Gastrocnemius medialis (tissue), 4 donors: ENCODE measurements at regions of chr3 and their contacts with region 1.

Region 1: DNA sequence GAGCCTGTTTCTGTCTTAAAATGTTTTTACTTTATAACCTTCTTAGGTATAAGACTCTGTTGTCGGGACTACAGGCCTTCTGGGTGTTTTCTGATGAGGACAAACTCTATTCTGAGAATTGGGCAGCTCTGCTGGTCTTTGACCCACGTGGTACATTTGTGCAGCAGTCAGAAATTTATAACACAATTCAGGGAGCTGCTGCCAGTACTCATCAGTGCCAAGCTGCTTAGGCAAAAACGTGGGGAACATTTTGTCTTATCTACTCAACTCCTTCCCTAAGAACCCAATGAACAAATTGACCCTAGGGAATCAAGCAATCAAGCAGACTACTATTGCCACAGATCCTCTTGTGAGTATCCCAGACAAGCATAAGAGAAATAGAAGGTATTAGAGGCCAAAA is 180.7 kb upstream of the PDZRN3 start:
- DNase-seq: peak; percentile 71 to 81
- ATAC-seq: peak; percentile 99
- H3K4me3 ChIP-seq: no peak overlapping the region
- H3K27ac ChIP-seq: peak overlapping the region; percentile 63 to 86 (median 72)
- H3K4me1 ChIP-seq: peaks cover 14 to 28% of the 10 kb centered on the region in 2 donors
- H3K27me3 ChIP-seq: no peaks in the 10 kb centered on the region
- CTCF ChIP-seq: no peak
- POLR2A ChIP-seq: no peak

Region 2: GRCh38 chr3:73624821-73625665 is 180.4 kb before region 1 on chr3 and contains the start of gene PDZRN3:
- in situ Hi-C with region 1: no loop called
- intact Hi-C with region 1: loop called (anchors 5 kb)
- DNase-seq: peak; percentile 41 to 44
- ATAC-seq: peak; percentile 46 to 48
- H3K4me3 ChIP-seq: peak within 1 kb of the TSS; percentile 71 to 93 (median 78)
- H3K27ac ChIP-seq: peak within 1 kb of the TSS; percentile 89 to 94 (median 92)
- H3K4me1 ChIP-seq: peaks cover 34 to 56% of the 10 kb centered on the region in 2 donors
- H3K27me3 ChIP-seq: no peaks in the 10 kb centered on the region
- CTCF ChIP-seq: peak in 1 of 5 experiments; percentile 3
- POLR2A ChIP-seq: peak; percentile 64 to 83
- total RNA-seq, gene PDZRN3: 9.1 to 30.3 (median 24.7) TPM

Region 3: DNA sequence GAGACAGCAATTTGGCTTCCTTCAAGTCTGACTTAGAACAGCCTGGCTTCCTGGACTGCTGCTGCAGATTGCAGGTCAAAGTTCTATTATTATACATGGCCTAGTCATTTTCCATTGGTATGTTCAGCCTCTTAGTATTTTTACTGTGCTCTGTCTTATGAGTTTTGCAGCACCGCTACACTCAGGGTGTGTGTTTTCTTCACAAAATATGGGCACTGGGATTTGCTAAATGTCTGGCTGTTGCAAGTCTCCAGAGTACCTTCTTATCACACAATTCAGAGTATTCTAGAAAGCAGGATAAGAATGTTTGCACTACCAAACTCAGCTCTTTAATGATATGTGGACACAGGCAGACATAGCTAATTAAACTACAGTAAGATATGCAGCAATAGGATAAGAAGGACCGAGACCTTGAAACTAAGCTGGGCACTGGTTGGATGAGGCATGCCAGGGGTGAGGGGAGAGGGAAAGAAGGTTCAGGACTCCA is 22.3 kb after region 1 on chr3:
- in situ Hi-C with region 1: no loop called
- intact Hi-C with region 1: no loop called
- DNase-seq: no peak
- ATAC-seq: peak; percentile 91 to 94
- H3K4me3 ChIP-seq: no peak overlapping the region
- H3K27ac ChIP-seq: peak overlapping the region; percentile 24 to 76 (median 56)
- H3K4me1 ChIP-seq: peaks cover 11 to 21% of the 10 kb centered on the region in 2 donors
- H3K27me3 ChIP-seq: no peaks in the 10 kb centered on the region
- CTCF ChIP-seq: no peak
- POLR2A ChIP-seq: no peak